WTC11 (cell line): ENCODE measurements at regions of chr6 and their contacts with region 1.

Region 1: GRCh38 chr6:34055223-34055933 is 90.5 kb downstream of the GRM4 start:
- DNase-seq: peak; percentile 82
- ATAC-seq: peak; percentile 57
- H3K4me3 Mint-ChIP-seq: no peak overlapping the region
- H3K27ac Mint-ChIP-seq: no peak overlapping the region
- H3K4me1 Mint-ChIP-seq: peaks cover 50% of the 10 kb centered on the region
- H3K27me3 Mint-ChIP-seq: no peaks in the 10 kb centered on the region; the same call in 1 of the 2 replicates
- CTCF ChIP-seq: peak; percentile 68

Region 2: DNA sequence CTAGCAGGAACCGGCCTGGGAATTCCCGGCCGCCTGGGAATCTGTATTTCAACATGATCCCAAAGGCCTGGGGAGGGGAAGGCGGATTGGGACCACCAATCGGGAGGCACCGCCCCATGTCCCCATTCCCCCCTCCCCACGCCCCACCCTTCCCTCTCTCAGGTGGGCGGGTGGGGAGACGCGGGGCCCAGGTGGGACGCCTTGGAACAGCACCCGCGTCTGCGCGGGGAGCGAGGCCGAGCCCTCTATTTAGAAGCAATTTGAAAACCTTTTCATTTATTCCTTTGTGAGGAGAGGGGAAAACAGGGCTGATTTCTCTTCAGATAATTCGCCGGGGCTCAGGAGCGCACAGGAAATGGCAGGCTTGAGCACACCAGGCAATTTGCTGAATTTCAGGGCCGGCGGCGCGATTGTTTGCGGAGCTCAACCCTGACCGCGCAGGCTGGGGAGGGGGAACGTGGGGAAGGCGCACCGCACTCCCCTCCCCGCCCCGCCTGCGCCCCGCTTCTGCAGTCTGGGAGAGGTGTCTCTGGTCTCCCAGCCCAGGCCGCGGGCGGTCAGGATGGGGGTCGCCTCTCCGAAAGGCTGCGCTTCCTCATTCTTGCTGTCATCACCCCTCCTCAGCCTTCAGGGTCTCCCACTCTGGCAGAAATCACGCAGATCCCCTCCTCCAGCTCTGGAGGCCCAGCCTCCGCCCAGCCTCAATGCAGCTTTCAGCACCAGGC is 79.6 kb before region 1 on chr6:
- CTCF ChIA-PET with region 1: interaction called, 12 read pairs
- POLR2A ChIA-PET with region 1: no interaction called
- DNase-seq: peak; percentile 51
- ATAC-seq: peak; percentile 69
- H3K4me3 Mint-ChIP-seq: peak overlapping the region; percentile 68
- H3K27ac Mint-ChIP-seq: no peak overlapping the region
- H3K4me1 Mint-ChIP-seq: peaks cover 5% of the 10 kb centered on the region
- H3K27me3 Mint-ChIP-seq: peaks cover 52% of the 10 kb centered on the region
- CTCF ChIP-seq: no peak

Region 3: GRCh38 chr6:34036357-34037069 is 18.9 kb before region 1 on chr6:
- CTCF ChIA-PET with region 1: interaction called, 13 read pairs
- POLR2A ChIA-PET with region 1: no interaction called
- DNase-seq: no peak
- ATAC-seq: no peak
- H3K4me3 Mint-ChIP-seq: no peak overlapping the region
- H3K27ac Mint-ChIP-seq: no peak overlapping the region
- H3K4me1 Mint-ChIP-seq: no peaks in the 10 kb centered on the region
- H3K27me3 Mint-ChIP-seq: no peaks in the 10 kb centered on the region
- CTCF ChIP-seq: no peak

Region 4: GRCh38 chr6:34082864-34083626 is 27.7 kb after region 1 on chr6:
- CTCF ChIA-PET with region 1: interaction called, 43 read pairs
- POLR2A ChIA-PET with region 1: no interaction called
- DNase-seq: no peak
- ATAC-seq: no peak
- H3K4me3 Mint-ChIP-seq: no peak overlapping the region
- H3K27ac Mint-ChIP-seq: 0 out of 2 replicates have a peak overlapping the region, but pooled peaks have one; percentile 53
- H3K4me1 Mint-ChIP-seq: peaks cover 33% of the 10 kb centered on the region
- H3K27me3 Mint-ChIP-seq: no peaks in the 10 kb centered on the region
- CTCF ChIP-seq: no peak

Region 5: DNA sequence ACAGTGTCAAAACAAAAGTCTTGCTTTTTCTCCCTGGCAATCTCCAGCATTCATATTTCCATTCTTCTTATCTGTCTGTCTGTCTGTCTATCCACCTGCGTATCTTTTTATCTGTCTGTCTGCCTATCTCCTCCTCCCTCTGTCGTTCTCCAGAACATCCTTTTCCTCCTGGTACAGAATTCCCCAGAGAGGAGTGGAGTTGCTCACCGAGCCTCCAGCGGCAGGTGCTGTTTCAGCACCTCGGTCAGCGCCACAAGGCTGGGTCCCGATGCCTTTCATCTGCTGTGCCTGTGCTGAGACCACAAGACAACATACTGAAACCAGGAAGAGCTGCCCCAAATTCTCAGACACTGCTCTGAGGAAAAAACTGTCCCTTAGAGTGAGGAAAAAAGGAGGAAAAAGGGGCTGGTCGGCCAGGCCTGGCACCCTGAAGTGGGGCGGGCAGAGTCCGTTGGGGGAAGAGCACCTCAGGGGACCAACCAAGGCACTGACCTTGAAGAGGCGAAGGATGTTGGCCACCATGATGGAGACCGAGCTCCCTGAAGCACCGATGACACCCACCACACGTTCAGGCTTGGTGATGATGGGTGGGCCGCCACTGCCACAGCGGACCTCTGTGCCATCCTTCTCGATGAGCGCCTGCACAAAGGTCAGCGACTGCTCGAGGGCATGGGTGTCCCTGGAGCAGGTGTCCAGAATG is 77.3 kb after region 1 on chr6:
- CTCF ChIA-PET with region 1: interaction called, 34 read pairs
- POLR2A ChIA-PET with region 1: no interaction called
- DNase-seq: peak; percentile 89
- ATAC-seq: peak; percentile 29
- H3K4me3 Mint-ChIP-seq: peak overlapping the region; percentile 64
- H3K27ac Mint-ChIP-seq: peak overlapping the region; percentile 96
- H3K4me1 Mint-ChIP-seq: peaks cover 86% of the 10 kb centered on the region
- H3K27me3 Mint-ChIP-seq: no peaks in the 10 kb centered on the region
- CTCF ChIP-seq: no peak

Region 6: DNA sequence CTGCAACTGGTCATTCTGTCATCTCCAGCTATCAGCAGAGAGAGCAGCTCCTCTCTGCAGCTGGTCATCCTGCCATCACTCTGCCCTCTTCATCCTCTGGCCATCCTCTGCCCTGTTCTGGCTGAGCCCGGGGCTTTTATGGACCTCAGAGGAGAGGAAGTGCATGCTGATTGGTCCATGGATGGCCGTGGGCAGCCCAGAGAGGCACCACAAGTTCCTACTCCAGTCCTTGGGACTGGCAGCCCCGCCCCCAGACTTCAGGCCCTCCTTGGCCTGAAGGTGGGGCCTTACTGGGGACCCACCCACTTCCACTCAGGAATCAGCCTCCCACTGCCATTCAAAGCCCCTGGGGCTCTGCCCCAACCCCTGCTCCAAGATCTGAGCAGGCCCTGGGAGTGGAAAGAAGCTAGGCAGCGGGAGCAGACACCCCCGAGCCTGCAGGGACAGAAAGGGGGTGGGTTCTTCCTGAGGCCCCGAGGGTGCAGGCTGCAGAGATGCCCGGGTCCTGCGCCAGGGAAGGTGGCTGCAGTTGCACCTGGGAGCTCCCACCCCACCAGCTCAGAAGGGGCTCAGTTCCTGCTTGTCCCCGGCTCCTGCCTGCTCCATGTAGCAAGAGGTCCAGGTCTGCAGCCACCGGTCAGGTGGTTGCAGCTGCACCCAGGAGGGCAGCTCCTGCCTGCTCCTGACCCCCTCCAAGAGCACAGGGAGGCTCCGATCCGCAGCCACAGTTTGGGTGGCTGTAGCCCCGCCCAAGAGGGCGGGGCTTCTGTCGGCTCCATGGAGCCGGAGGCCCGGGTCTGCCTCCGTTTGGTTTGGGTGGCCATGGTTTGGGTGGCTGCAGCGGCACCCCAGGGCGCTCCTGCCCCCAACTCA is 147.2 kb after region 1 on chr6:
- CTCF ChIA-PET with region 1: no interaction called
- POLR2A ChIA-PET with region 1: no interaction called
- DNase-seq: peak; percentile 69
- ATAC-seq: peak; percentile 77
- H3K4me3 Mint-ChIP-seq: peak overlapping the region; percentile 3; the same call in 1 of the 2 replicates
- H3K27ac Mint-ChIP-seq: 0 out of 2 replicates have a peak overlapping the region, but pooled peaks have one; percentile 52
- H3K4me1 Mint-ChIP-seq: peaks cover 51% of the 10 kb centered on the region
- H3K27me3 Mint-ChIP-seq: no peaks in the 10 kb centered on the region; the same call in 1 of the 2 replicates
- CTCF ChIP-seq: no peak

Region 7: GRCh38 chr6:34284563-34285447 is 229.4 kb after region 1 on chr6:
- CTCF ChIA-PET with region 1: no interaction called
- POLR2A ChIA-PET with region 1: no interaction called
- DNase-seq: no peak
- ATAC-seq: no peak
- H3K4me3 Mint-ChIP-seq: no peak overlapping the region
- H3K27ac Mint-ChIP-seq: peak overlapping the region; percentile 63
- H3K4me1 Mint-ChIP-seq: no peaks in the 10 kb centered on the region
- H3K27me3 Mint-ChIP-seq: no peaks in the 10 kb centered on the region
- CTCF ChIP-seq: no peak

Region 8: DNA sequence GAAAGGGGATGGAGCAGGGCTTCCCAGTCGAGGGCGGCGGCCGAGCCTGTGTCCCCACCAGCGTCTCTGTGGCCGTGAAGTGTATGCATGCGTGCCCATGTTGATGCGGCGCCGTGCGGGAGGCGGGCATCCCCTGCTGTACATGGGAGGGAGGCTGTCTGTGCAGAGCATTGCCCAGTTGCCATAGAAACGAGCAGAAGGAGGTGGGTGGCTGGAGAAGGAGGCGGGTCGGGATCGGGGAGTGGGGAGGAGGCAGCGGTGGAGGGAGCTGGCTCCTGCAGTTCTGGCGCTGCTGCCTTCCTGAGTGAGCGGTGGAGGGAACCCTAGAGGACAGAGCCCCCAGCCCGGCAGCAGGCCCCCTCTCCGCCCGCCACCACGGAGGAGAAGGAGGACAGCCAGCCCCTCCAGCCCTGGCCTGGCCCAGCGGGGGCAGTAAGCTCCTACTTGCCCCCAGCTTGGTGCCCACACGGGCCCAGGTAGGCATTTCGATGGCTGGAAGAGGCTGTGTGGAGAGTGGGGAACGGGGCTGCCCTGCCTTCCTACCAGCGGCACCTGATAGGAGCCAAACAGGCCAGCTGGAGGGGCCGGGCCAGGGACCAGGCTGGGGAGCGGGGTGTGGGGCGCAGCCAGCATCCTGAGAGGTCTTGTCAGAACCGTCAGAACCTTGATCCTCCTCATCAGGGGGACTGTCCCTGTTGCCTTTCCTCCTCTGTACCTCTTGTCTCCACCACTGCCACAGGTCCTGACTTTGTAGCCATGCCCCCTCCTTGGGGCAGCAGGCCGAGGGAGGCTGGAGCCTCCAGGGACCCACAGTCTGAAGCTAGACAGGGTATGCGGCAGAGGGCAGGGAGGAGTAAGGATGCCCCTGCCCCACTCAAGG is 459.5 kb after region 1 on chr6:
- CTCF ChIA-PET with region 1: no interaction called
- POLR2A ChIA-PET with region 1: no interaction called
- DNase-seq: peak; percentile 58
- ATAC-seq: peak; percentile 73
- H3K4me3 Mint-ChIP-seq: peak overlapping the region; percentile 94
- H3K27ac Mint-ChIP-seq: no peak overlapping the region
- H3K4me1 Mint-ChIP-seq: peaks cover 28% of the 10 kb centered on the region
- H3K27me3 Mint-ChIP-seq: peaks cover 3% of the 10 kb centered on the region
- CTCF ChIP-seq: no peak